Right lobe of liver (tissue), 6 donors: ENCODE measurements at regions of chr1 and their contacts with region 1.

Region 1: DNA sequence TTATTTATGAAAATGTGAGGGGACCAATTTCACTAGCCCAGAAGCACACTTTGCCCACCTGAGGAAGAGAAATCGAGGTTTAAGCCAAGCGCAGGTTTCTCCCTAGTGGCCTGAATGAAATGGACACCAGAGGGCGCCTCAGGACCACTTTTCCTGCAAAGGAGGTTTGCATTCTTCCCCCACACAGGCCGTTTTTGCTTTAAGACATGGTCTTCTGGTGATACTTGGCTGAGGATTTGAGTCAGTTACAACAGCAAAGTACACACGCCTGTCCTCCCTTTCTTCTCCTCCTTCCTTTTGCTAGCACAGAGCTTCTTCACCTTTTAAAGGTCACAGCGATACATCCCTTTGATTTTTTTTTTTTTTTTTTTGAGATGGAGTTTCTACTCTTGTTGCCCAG is 5.4 kb downstream of the PLA2G2E start:
- DNase-seq: peak; percentile 70 to 76 (median 72)
- ATAC-seq: peak; percentile 70 to 88 (median 82)
- H3K4me3 ChIP-seq: no peak overlapping the region
- H3K27ac ChIP-seq: no peak overlapping the region
- H3K4me1 ChIP-seq: no peaks in the 10 kb centered on the region
- H3K27me3 ChIP-seq: no peaks in the 10 kb centered on the region
- CTCF ChIP-seq: peak; percentile 80 to 89 (median 88)
- POLR2A ChIP-seq: no peak

Region 2: DNA sequence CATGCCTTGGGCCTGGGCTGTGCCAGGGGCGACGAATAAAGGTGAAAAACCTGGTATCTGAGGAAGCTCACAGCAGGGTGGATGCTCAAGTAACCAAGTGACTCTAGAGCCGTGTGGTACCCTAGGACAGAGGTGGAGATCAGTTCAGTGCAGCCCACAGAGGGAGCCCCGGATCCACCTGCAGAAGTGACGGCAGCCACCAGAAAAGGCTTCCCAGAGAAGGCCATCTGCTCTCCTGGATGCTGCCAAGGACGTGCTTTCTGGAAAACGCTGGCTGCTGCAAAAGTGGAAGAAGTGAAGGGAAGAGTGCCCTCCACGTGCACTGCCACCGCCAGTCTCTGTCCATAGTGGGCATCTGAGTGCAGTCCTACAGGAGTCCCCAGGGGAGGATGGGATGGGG is 146.0 kb before region 1 on chr1:
- intact Hi-C with region 1: no loop called
- DNase-seq: no peak
- ATAC-seq: no peak
- H3K4me3 ChIP-seq: no peak overlapping the region
- H3K27ac ChIP-seq: no peak overlapping the region
- H3K4me1 ChIP-seq: no peaks in the 10 kb centered on the region
- H3K27me3 ChIP-seq: no peaks in the 10 kb centered on the region
- CTCF ChIP-seq: no peak
- POLR2A ChIP-seq: no peak

Region 3: GRCh38 chr1:20142001-20142710 is 224.1 kb after region 1 on chr1:
- intact Hi-C with region 1: loop called in 1 of 2 experiments (anchors 10 kb)
- DNase-seq: no peak
- ATAC-seq: no peak
- H3K4me3 ChIP-seq: no peak overlapping the region
- H3K27ac ChIP-seq: no peak overlapping the region
- H3K4me1 ChIP-seq: no peaks in the 10 kb centered on the region
- H3K27me3 ChIP-seq: no peaks in the 10 kb centered on the region
- CTCF ChIP-seq: no peak
- POLR2A ChIP-seq: no peak

Region 4: DNA sequence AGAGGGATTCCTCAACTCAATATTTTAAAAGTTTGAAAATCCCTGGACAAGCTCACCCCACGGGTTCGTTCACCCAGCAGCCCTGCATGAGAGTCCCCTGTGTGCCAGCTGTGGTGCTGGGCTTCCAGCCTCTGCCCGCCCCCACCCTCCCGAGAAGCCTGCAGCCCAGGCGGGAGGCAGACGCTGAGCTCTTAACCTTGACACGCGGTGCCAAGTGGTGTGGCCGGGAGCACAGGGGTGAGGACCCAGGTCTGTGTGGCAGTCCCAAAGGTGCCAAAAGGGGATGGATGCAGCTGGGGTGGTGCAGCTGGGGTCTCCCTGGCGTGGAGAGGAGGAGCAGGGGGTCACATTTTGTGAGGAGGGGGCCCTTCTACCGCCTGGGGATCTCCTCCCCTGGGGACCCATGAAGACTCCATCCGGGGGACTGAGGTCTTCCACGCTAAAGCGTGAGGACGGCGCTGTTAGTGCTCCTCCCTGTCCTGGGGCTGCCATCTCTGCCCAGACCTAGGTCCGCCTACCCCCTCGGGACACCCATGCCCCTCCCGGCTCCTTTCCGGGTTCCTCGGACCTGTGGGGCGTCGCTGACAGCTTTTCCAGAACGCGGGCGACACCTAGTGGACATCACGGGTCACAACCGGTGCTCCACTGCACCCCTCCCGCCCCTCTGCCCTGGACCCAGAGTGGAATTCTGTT is 234.0 kb after region 1 on chr1:
- intact Hi-C with region 1: loop called (anchors 5 to 10 kb)
- DNase-seq: peak; percentile 80 to 87 (median 84)
- ATAC-seq: peak; percentile 71 to 78 (median 74)
- H3K4me3 ChIP-seq: peak overlapping the region in 2 of 3 donors; percentile 16 to 28
- H3K27ac ChIP-seq: peak overlapping the region in 2 of 3 donors; percentile 76 to 79
- H3K4me1 ChIP-seq: peaks cover 0 to 26% (median 13%) of the 10 kb centered on the region in 4 donors
- H3K27me3 ChIP-seq: no peaks in the 10 kb centered on the region
- CTCF ChIP-seq: peak; percentile 93 to 98 (median 96)
- POLR2A ChIP-seq: no peak